ENCODE measurements at regions of chr10 and their contacts with region 1.

Region 1: GRCh38 chr10:3785257-3785850 is 345 bp upstream of the KLF6 start:
- DNase-seq: peak; percentile 99 to 100 (median 100)
- ATAC-seq: peak; percentile 84
- H3K4me3 ChIP-seq: peak overlapping the region; percentile 92
- H3K27ac ChIP-seq: peak overlapping the region; percentile 97
- H3K4me1 ChIP-seq: peaks cover 20 to 34% of the 10 kb centered on the region in 2 experiments; a peak in 4 of 5 replicates
- H3K27me3 ChIP-seq: no peaks in the 10 kb centered on the region
- CTCF ChIP-seq: no peak
- EP300 ChIP-seq: peak; percentile 14; the same call in 1 of the 2 replicates
- POLR2A ChIP-seq: peak; percentile 88
- RAD21 ChIP-seq: peak in 1 of 2 experiments; percentile 6; a peak in 2 of 4 replicates

Region 2: DNA sequence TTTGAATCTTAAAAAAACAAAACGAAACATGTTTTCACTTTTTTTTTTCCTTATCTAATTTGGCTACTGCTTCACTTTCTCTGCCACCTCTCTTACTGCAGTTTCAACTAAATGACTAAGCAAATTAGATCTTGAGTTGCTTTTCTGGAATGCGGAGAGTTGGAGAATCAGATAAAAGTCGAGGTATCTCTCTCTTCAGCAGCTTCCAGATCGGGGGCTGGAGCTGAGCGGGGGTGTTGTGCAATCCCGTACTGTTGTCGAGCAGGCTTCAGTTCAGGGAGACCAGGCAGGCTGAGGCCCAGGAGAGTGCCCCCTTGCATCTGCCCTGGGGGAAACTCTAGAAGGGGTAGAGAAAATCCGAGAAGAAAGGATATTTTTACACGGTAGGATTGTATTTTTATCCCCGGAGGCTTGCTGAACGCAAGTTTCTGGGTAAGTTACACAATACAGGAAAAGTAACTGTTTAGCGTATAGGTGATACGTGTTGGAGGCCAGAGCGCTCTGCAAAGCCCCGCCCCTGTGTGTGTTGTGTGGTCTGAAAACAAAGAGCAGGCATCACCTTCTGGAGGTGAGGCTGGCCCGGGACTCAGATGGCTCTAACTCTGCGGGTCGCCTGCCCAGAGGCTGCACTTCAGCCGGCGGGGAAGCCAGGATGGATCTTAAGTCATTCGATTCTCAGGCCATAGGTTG is 116.9 kb before region 1 on chr10:
- CTCF ChIA-PET with region 1: no interaction called
- POLR2A ChIA-PET with region 1: interaction called, 12 read pairs
- in situ Hi-C with region 1: no loop called
- intact Hi-C with region 1: loop called (anchors 5 kb)
- DNase-seq: peak; percentile 41 to 87 (median 64)
- ATAC-seq: peak; percentile 71
- H3K4me3 ChIP-seq: no peak overlapping the region
- H3K27ac ChIP-seq: peak overlapping the region; percentile 66
- H3K4me1 ChIP-seq: peaks cover 39 to 51% of the 10 kb centered on the region in 2 experiments
- H3K27me3 ChIP-seq: no peaks in the 10 kb centered on the region
- CTCF ChIP-seq: no peak; a peak in 1 of 6 replicates
- EP300 ChIP-seq: peak; percentile 88
- POLR2A ChIP-seq: no peak
- RAD21 ChIP-seq: peak; percentile 19 to 27; a peak in 2 of 4 replicates

Region 3: GRCh38 chr10:3698312-3698711 is 87.0 kb before region 1 on chr10:
- CTCF ChIA-PET with region 1: no interaction called
- POLR2A ChIA-PET with region 1: no interaction called
- in situ Hi-C with region 1: no loop called
- intact Hi-C with region 1: no loop called
- DNase-seq: no peak
- ATAC-seq: no peak
- H3K4me3 ChIP-seq: no peak overlapping the region
- H3K27ac ChIP-seq: no peak overlapping the region
- H3K4me1 ChIP-seq: no peaks in the 10 kb centered on the region
- H3K27me3 ChIP-seq: peaks cover 0 to 15% of the 10 kb centered on the region in 2 experiments; a peak in 2 of 5 replicates
- CTCF ChIP-seq: no peak
- EP300 ChIP-seq: no peak
- POLR2A ChIP-seq: no peak
- RAD21 ChIP-seq: no peak

Region 4: DNA sequence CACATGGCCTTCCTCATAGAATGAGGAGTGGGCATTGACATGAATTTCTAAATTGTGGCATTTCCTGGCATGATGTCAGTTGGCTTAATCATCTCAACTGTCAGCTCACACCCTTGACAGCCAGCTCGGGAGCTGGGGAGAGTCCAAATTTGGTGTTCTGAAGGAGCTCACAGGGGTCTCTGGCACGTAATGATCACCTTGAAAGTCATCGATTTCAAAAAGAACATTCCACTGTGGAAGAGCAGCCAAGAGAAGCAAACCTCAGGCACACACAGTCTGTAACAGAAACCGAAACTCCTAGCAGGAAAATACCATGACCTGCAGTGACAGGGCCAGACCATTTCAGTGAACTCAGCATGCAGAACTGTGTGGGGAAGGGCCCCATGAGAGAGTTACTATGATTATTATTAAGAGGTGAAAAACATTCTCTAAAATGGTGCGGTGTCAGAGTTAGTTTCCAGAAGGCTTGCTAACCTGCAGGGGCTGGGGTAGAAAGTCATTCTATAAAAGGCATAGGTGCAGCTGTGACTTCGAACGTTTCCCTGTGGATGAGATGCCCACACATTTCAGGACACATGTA is 26.0 kb after region 1 on chr10:
- CTCF ChIA-PET with region 1: no interaction called
- POLR2A ChIA-PET with region 1: interaction called, 33 read pairs
- in situ Hi-C with region 1: no loop called
- intact Hi-C with region 1: no loop called
- DNase-seq: no peak
- ATAC-seq: 0 out of 3 replicates have a peak, but pooled peaks have one; percentile 7
- H3K4me3 ChIP-seq: no peak overlapping the region
- H3K27ac ChIP-seq: peak overlapping the region; percentile 91
- H3K4me1 ChIP-seq: peaks cover 38 to 54% of the 10 kb centered on the region in 2 experiments
- H3K27me3 ChIP-seq: no peaks in the 10 kb centered on the region; a peak in 1 of 5 replicates
- CTCF ChIP-seq: no peak
- EP300 ChIP-seq: no peak
- POLR2A ChIP-seq: no peak
- RAD21 ChIP-seq: no peak

Region 5: GRCh38 chr10:3852147-3852904 is 67.0 kb after region 1 on chr10:
- CTCF ChIA-PET with region 1: no interaction called
- POLR2A ChIA-PET with region 1: interaction called, 19 read pairs
- in situ Hi-C with region 1: no loop called
- intact Hi-C with region 1: no loop called
- DNase-seq: peak; percentile 60 to 85 (median 66)
- ATAC-seq: peak; percentile 92
- H3K4me3 ChIP-seq: no peak overlapping the region
- H3K27ac ChIP-seq: peak overlapping the region; percentile 81
- H3K4me1 ChIP-seq: peaks cover 11 to 30% of the 10 kb centered on the region in 2 experiments
- H3K27me3 ChIP-seq: no peaks in the 10 kb centered on the region
- CTCF ChIP-seq: no peak
- EP300 ChIP-seq: peak; percentile 84
- POLR2A ChIP-seq: 0 out of 2 replicates have a peak, but pooled peaks have one; percentile 33
- RAD21 ChIP-seq: no peak

Region 6: DNA sequence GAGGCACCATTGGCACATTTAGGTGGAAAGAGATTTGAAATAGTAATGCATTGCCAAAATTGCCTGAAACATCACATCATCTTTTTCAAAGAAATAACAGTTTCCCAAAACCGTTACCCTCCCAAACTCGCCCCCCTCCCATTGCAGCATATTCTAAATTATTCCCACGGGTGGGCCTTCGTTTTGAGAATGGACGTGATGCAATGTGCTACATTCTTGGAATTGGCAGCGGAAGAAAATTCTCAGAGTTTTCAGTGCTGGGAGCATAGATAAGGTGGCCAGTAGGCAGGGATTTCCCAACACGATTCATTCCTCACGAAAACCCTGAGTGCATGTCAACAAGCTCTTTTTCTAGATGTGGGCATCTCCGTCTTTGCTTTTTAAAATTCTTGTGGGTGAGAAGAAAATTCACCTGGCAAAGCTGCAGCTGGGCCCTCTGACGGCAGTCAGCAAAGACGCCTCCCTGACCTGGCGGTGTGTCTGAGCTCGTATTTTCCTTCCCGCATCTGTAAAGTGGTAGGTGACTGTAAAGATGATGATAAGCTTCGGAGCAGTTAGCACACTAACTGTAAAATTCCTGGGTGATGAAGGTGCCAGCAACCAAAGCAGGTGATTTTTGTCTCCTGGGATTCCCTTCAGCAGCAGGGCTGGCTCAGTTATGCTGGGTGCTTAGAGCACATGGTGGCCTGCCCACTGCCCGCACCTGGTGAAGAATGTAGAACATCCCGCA is 141.5 kb after region 1 on chr10:
- CTCF ChIA-PET with region 1: no interaction called
- POLR2A ChIA-PET with region 1: interaction called, 12 read pairs
- in situ Hi-C with region 1: no loop called
- intact Hi-C with region 1: loop called (anchors 5 kb)
- DNase-seq: peak; percentile 31 to 85 (median 52)
- ATAC-seq: peak; percentile 82
- H3K4me3 ChIP-seq: peak overlapping the region; percentile 1; the same call in 1 of the 2 replicates
- H3K27ac ChIP-seq: peak overlapping the region; percentile 32
- H3K4me1 ChIP-seq: peaks cover 11 to 30% of the 10 kb centered on the region in 2 experiments; a peak in 4 of 5 replicates
- H3K27me3 ChIP-seq: no peaks in the 10 kb centered on the region
- CTCF ChIP-seq: no peak
- EP300 ChIP-seq: peak; percentile 96
- POLR2A ChIP-seq: no peak
- RAD21 ChIP-seq: no peak

Region 7: GRCh38 chr10:3961082-3961481 is 175.7 kb after region 1 on chr10:
- CTCF ChIA-PET with region 1: no interaction called
- POLR2A ChIA-PET with region 1: interaction called, 15 read pairs
- in situ Hi-C with region 1: no loop called
- intact Hi-C with region 1: no loop called
- DNase-seq: no peak
- ATAC-seq: no peak
- H3K4me3 ChIP-seq: no peak overlapping the region
- H3K27ac ChIP-seq: no peak overlapping the region
- H3K4me1 ChIP-seq: no peaks in the 10 kb centered on the region
- H3K27me3 ChIP-seq: peaks cover 20 to 23% of the 10 kb centered on the region in 2 experiments
- CTCF ChIP-seq: no peak
- EP300 ChIP-seq: no peak
- POLR2A ChIP-seq: no peak
- RAD21 ChIP-seq: no peak

Measured in K562 (cell line).